Activated T-helper 1 cell treated with anti-CD3 and anti-CD28 coated beads, Interleukin-12 subunit alpha, Interleukin-12 subunit beta, Interleukin-2, Interleukin-4 antibody, amounts not matched to agents 30 ng/mL and 10 ng/mL and 1 ng/mL, durations not matched to agents 14 hours and 24 hours and 36 hours (primary cell): ENCODE measurements at regions of chr2 and their contacts with region 1.

Region 1: DNA sequence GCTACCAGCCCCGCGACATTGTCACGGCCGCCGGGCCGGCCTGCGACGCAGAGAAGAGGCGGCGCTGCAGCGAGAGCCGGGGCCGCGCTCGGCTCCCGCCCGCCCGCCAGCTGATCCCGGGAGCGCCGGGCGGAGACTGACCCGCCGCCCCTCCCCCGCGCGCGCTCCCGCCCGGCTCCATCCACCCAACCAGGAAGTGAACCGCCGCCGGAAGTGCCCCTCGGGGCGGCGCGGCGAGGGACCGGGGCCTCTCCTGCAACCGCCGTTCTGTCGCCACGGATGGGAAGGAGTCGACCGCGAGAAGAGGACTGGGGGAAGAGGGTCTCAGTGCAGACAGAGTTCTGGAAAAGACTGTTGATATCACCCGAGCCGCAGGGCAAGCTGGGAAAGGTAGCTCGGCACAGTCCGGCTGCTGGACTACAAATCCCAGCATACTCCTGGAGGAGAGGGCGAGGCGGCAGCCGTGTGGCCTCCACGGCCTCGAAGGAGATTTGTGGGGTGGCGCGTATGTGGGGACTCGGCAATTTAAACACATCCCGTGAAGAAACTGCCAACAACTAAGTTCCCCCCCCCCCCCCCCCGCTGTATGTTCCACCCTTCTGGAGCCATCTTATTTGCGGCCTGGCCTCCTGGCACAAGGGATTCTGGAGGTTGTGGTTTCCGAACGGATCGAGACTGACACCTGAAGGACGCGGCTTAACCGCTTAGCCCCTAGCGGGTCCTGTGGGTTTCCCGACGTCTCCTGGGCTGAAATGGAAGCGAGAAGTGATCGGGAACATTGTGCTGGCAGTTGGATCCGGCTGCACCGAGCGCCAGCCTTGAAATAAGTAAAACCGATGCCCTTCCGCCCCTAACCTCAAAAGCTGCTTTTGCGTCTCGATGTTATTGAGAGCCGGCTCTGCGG is at the start of gene AAK1:
- DNase-seq: peak; percentile 76
- H3K4me3 Mint-ChIP-seq: peak within 1 kb of the TSS; percentile 92
- H3K27ac Mint-ChIP-seq: peak within 1 kb of the TSS; percentile 95
- H3K4me1 Mint-ChIP-seq: peaks cover 71% of the 10 kb centered on the region
- H3K27me3 Mint-ChIP-seq: no peaks in the 10 kb centered on the region
- total RNA-seq, gene AAK1: 89.2 and 94.0 TPM in 2 replicates

Region 2: GRCh38 chr2:69436938-69437750 is 206.7 kb before region 1 on chr2 and contains the start of gene NFU1:
- intact Hi-C with region 1: loop called (anchors 2 kb)
- DNase-seq: peak; percentile 79
- H3K4me3 Mint-ChIP-seq: peak within 1 kb of the TSS; percentile 93
- H3K27ac Mint-ChIP-seq: peak within 1 kb of the TSS; percentile 99
- H3K4me1 Mint-ChIP-seq: peaks cover 17% of the 10 kb centered on the region
- H3K27me3 Mint-ChIP-seq: no peaks in the 10 kb centered on the region
- total RNA-seq, gene NFU1: 29.3 and 29.8 TPM in 2 replicates

Region 3: DNA sequence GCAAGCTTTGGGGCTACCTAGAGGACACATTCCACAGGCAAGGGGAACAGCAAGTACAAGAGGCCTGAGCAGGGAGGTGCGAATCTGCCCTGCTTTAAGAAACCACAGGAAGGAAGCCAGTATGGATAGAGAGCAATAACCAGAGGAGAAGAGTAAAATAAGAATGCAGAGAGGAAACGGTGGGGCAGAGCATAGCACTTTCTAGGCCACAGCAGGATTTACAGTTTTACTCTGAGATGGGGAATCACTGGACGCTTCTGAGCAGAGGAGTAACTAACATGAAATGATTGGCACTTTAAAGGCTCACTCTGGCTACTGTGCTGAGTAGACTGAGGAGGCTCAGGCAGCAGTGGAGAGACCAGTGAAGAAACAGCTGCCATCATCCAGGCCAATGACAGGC is 24.1 kb before region 1 on chr2:
- intact Hi-C with region 1: loop called (anchors 1 kb)
- DNase-seq: peak; percentile 23
- H3K4me3 Mint-ChIP-seq: no peak overlapping the region
- H3K27ac Mint-ChIP-seq: no peak overlapping the region
- H3K4me1 Mint-ChIP-seq: peaks cover 35% of the 10 kb centered on the region
- H3K27me3 Mint-ChIP-seq: no peaks in the 10 kb centered on the region

Region 4: GRCh38 chr2:69715964-69716363 is 72.1 kb after region 1 on chr2:
- intact Hi-C with region 1: loop called (anchors 1 kb)
- DNase-seq: no peak
- H3K4me3 Mint-ChIP-seq: no peak overlapping the region
- H3K27ac Mint-ChIP-seq: no peak overlapping the region
- H3K4me1 Mint-ChIP-seq: peaks cover 20% of the 10 kb centered on the region
- H3K27me3 Mint-ChIP-seq: peaks cover 2% of the 10 kb centered on the region

Region 5: GRCh38 chr2:70086838-70087701 is 443.2 kb after region 1 on chr2 and contains the start of gene PCBP1:
- intact Hi-C with region 1: loop called (anchors 10 kb)
- DNase-seq: peak; percentile 91
- H3K4me3 Mint-ChIP-seq: peak within 1 kb of the TSS; percentile 99
- H3K27ac Mint-ChIP-seq: peak within 1 kb of the TSS; percentile 100
- H3K4me1 Mint-ChIP-seq: peaks cover 56% of the 10 kb centered on the region
- H3K27me3 Mint-ChIP-seq: no peaks in the 10 kb centered on the region
- total RNA-seq, gene PCBP1: 426 and 427 TPM in 2 replicates

Region 6: DNA sequence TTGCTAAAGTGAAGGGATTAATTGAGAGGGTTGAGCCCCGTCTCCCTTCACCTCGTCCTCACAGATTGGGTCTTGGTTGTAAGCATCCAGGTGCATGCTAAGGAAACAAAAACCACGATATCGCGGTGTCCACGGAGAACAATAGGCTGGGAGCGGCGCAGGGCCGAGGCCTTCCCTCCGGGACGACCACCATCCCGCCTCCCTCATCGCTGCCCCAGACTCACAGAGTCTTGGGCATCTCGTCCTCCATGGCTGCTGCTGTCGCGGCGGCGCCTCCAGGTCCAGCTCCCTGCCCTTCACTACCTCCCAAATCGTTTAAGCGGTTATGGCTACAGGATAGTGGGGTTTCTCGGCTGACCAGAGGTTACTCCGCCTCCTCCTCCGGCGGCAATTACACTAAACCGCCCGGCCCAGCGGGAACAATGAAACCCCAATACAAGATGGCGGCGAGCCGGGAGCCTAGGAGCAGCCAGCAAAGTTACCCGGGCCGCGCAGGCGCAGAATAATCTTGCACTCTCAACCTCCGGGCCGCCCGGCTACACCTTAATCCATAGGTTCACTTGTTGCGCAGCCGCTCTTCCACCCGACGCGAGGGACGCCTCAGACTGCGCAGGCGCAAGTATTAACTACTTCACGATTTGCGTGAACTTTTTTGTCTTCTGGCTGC is 604.5 kb after region 1 on chr2 and contains the start of gene TIA1:
- intact Hi-C with region 1: loop called (anchors 5 kb)
- DNase-seq: peak; percentile 98
- H3K4me3 Mint-ChIP-seq: peak within 1 kb of the TSS; percentile 99
- H3K27ac Mint-ChIP-seq: peak within 1 kb of the TSS; percentile 99
- H3K4me1 Mint-ChIP-seq: peaks cover 42% of the 10 kb centered on the region
- H3K27me3 Mint-ChIP-seq: no peaks in the 10 kb centered on the region
- total RNA-seq, gene TIA1: 96.8 and 101 TPM in 2 replicates